Activated CD4-positive, alpha-beta T cell treated with anti-CD3 and anti-CD28 coated beads for 36 hours (primary cell): ENCODE measurements at regions of chr11 and their contacts with region 1.

Region 1: GRCh38 chr11:62169091-62169847 is 20.7 kb upstream of the SCGB1D1 start:
- DNase-seq: no peak
- ATAC-seq: no peak
- H3K4me3 Mint-ChIP-seq: no peak overlapping the region
- H3K27ac Mint-ChIP-seq: no peak overlapping the region
- H3K4me1 Mint-ChIP-seq: peaks cover 4% of the 10 kb centered on the region
- H3K27me3 Mint-ChIP-seq: peaks cover 29% of the 10 kb centered on the region

Region 2: GRCh38 chr11:61816736-61817455 is 352.4 kb before region 1 on chr11 and contains the start of gene FADS1:
- CTCF ChIA-PET with region 1: no interaction called
- POLR2A ChIA-PET with region 1: no interaction called
- intact Hi-C with region 1: no loop called
- DNase-seq: peak; percentile 92
- ATAC-seq: peak; percentile 67
- H3K4me3 Mint-ChIP-seq: peak within 1 kb of the TSS; percentile 89
- H3K27ac Mint-ChIP-seq: peak within 1 kb of the TSS; percentile 80
- H3K4me1 Mint-ChIP-seq: peaks cover 7% of the 10 kb centered on the region
- H3K27me3 Mint-ChIP-seq: peaks cover 25% of the 10 kb centered on the region
- total RNA-seq, gene FADS1: 18.9 to 23.7 TPM

Region 3: GRCh38 chr11:62143727-62144126 is 25.5 kb before region 1 on chr11:
- CTCF ChIA-PET with region 1: no interaction called
- POLR2A ChIA-PET with region 1: no interaction called
- intact Hi-C with region 1: no loop called
- DNase-seq: no peak
- ATAC-seq: no peak
- H3K4me3 Mint-ChIP-seq: no peak overlapping the region
- H3K27ac Mint-ChIP-seq: no peak overlapping the region
- H3K4me1 Mint-ChIP-seq: no peaks in the 10 kb centered on the region
- H3K27me3 Mint-ChIP-seq: no peaks in the 10 kb centered on the region

Region 4: GRCh38 chr11:62201370-62201769 is 32.1 kb after region 1 on chr11:
- CTCF ChIA-PET with region 1: interaction called, 4 read pairs
- POLR2A ChIA-PET with region 1: no interaction called
- intact Hi-C with region 1: loop called in 1 of 2 experiments (anchors 2 kb)
- DNase-seq: no peak
- ATAC-seq: no peak
- H3K4me3 Mint-ChIP-seq: no peak overlapping the region
- H3K27ac Mint-ChIP-seq: no peak overlapping the region
- H3K4me1 Mint-ChIP-seq: no peaks in the 10 kb centered on the region
- H3K27me3 Mint-ChIP-seq: peaks cover 26% of the 10 kb centered on the region

Region 5: DNA sequence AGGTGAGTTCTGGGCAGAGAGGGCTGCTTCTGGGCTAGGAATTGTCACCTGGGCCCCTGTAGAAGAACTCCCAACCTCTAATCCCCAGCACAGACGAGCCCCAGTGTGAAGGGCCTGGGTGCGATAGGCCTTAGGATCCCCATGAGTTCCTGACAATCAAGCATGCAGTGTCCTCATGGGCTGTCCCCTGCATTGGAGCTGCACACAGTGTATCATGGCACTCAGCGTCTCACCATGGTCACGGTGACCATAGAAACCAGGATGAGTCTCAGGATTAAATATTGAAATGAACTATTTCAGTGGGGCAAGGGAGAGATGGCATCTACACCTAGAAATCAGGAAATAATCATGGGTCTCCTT is 39.5 kb after region 1 on chr11:
- CTCF ChIA-PET with region 1: interaction called, 3 read pairs
- POLR2A ChIA-PET with region 1: no interaction called
- intact Hi-C with region 1: loop called (anchors 1 to 2 kb)
- DNase-seq: no peak
- ATAC-seq: no peak
- H3K4me3 Mint-ChIP-seq: no peak overlapping the region
- H3K27ac Mint-ChIP-seq: no peak overlapping the region
- H3K4me1 Mint-ChIP-seq: no peaks in the 10 kb centered on the region
- H3K27me3 Mint-ChIP-seq: peaks cover 7% of the 10 kb centered on the region

Region 6: DNA sequence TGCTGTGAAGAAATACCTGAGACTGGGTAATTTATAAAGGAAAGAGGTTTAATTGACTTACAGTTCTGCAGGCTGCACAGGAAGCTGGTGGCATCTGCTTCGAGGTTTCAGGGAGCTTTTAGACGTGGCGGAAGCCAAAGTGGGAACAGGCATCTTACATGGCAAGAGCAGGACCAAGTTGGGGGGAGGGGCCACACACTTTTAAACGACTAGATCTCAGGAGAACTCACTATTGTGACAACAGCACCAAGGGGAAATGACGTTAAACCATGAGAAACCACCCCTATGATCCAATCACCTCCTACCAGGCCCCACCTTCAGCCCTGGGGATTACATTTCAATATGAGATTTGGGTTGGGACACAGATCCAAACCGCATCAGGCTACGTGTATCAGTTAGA is 140.7 kb after region 1 on chr11:
- CTCF ChIA-PET with region 1: interaction called, 20 read pairs
- POLR2A ChIA-PET with region 1: no interaction called
- intact Hi-C with region 1: loop called (anchors 1 kb)
- DNase-seq: no peak
- ATAC-seq: no peak
- H3K4me3 Mint-ChIP-seq: no peak overlapping the region
- H3K27ac Mint-ChIP-seq: no peak overlapping the region
- H3K4me1 Mint-ChIP-seq: peaks cover 10% of the 10 kb centered on the region
- H3K27me3 Mint-ChIP-seq: peaks cover 18% of the 10 kb centered on the region

Region 7: DNA sequence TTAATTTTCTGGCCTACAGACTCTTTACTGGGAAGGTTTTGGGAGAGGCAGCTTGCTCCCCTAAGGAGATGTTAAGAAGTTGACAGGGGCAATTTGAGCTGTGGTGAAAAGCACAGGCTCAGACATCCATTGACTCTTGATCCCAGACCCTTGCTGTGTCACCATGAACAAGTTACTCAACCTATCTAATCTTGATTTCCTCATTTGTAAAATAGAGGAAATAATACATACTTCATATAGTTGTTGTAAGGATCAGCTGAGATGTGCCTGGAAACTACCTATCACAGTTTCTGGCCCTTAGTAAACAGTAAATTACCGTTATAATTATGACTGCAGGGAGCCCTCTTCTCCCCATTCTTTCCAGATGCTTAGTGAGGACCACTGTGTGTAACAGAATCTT is 146.2 kb after region 1 on chr11:
- CTCF ChIA-PET with region 1: interaction called, 20 read pairs
- POLR2A ChIA-PET with region 1: no interaction called
- intact Hi-C with region 1: loop called (anchors 1 kb)
- DNase-seq: no peak
- ATAC-seq: no peak
- H3K4me3 Mint-ChIP-seq: no peak overlapping the region
- H3K27ac Mint-ChIP-seq: no peak overlapping the region
- H3K4me1 Mint-ChIP-seq: peaks cover 10% of the 10 kb centered on the region
- H3K27me3 Mint-ChIP-seq: peaks cover 17% of the 10 kb centered on the region

Region 8: DNA sequence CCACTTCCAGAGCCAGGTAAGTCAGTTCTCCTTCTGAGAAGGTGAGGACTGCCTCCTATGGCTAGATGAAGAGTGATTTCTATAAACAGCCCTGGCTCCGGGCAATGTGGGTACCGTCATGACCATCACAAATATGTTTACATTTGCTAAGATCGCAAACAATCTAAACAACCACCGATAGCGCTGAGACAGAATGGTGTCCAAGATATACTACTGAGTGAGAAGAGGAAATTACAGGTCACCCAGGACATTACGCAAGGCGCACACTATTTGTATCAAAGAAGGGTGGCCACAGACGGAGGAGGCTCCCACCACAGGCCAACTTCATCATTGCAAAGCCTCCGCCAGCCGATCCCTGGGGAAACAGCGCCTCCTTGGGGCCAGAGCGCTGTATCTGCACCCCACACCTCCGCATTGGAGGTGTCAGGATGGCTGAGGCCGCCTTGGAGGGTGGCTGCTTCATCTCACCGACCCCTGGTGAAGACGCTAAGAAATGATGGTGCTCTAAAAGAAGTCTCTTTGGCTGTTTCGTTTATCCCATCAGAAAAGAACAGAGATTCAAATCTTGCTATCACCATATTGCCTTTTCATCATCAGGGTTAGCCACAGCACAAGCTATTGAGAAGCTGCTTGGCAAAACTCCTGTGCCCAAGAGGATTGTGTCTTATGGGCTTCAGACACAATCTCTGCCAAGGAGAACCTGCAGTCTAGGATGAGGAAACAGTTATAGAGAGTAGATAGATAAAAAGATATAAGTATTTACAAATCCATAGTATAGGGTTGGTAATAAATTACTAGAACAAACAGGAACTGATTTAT is 155.7 kb after region 1 on chr11:
- CTCF ChIA-PET with region 1: interaction called, 5 read pairs
- POLR2A ChIA-PET with region 1: interaction called, 4 read pairs
- intact Hi-C with region 1: loop called (anchors 1 kb)
- DNase-seq: peak; percentile 87
- ATAC-seq: peak; percentile 98
- H3K4me3 Mint-ChIP-seq: no peak overlapping the region
- H3K27ac Mint-ChIP-seq: no peak overlapping the region
- H3K4me1 Mint-ChIP-seq: peaks cover 3% of the 10 kb centered on the region
- H3K27me3 Mint-ChIP-seq: peaks cover 17% of the 10 kb centered on the region